Activated T-helper 1 cell treated with anti-CD3 and anti-CD28 coated beads, Interleukin-12 subunit alpha, Interleukin-12 subunit beta, Interleukin-2, Interleukin-4 antibody, amounts not matched to agents 30 ng/mL and 10 ng/mL and 1 ng/mL, durations not matched to agents 14 hours and 24 hours and 36 hours (primary cell): ENCODE measurements at regions of chr6 and their contacts with region 1.

Region 1: GRCh38 chr6:130760006-130760405 is 67.2 kb upstream of the SMLR1 start:
- DNase-seq: no peak
- H3K4me3 Mint-ChIP-seq: no peak overlapping the region
- H3K27ac Mint-ChIP-seq: no peak overlapping the region
- H3K4me1 Mint-ChIP-seq: peaks cover 6% of the 10 kb centered on the region
- H3K27me3 Mint-ChIP-seq: peaks cover 15% of the 10 kb centered on the region

Region 2: DNA sequence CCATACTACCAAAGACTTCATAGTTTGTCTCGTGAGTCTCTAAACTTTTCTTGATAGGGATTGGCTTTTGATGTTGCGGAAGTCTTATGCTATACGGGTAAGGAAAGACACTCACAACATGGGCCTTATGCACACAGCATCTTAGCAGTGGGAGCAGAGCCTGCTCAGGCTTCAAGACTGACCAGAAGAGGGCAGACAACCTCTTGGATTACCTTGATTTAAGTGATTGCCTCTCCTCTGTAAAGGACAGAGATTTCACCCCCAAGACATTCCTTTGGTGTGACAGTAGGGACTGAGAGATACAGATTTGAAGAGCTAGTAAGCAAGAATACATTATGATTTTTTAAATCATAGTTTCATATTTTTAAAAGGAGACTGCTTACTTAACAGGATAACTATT is 466.2 kb before region 1 on chr6:
- intact Hi-C with region 1: loop called (anchors 1 kb)
- DNase-seq: no peak
- H3K4me3 Mint-ChIP-seq: no peak overlapping the region
- H3K27ac Mint-ChIP-seq: no peak overlapping the region
- H3K4me1 Mint-ChIP-seq: no peaks in the 10 kb centered on the region
- H3K27me3 Mint-ChIP-seq: peaks cover 4% of the 10 kb centered on the region